Activated CD4-positive, alpha-beta T cell treated with anti-CD3 and anti-CD28 coated beads for 36 hours (primary cell): ENCODE measurements at regions of chr13 and their contacts with region 1.

Region 1: DNA sequence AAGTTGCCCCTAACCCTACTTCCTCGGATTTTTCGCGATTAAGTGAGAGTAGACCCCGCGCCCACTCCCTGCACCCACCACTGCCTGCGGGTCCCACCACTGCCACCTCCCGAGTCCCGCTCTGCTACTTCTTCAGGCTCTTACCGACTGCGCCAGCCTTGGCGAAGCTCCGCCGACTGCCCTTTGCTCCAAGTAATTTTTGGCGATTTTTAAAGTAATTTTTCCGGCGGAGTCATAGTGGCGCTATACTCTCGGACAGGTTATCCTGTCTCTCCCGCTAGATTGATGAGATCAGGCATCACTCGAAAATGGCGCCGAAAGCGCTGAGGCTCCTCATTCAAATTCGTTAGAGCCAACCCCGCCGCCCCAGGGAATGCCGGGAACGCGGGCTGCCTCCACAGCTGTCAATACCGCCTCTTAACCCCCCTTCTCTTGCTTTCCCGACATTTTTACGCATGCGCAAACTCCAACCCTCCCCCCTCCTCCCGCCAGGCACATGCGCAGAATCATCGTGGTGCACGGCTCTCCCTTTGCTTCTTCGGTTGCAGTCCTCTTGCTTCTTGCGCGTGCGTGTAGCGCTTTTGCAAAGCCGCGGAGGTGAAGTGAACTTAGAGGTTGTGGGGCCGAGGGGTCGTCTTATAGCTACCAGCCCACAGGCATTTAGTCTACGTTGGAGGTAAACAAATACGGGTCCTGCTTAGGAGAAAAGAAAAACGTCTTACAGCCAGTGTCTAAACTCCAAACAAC is 66.6 kb downstream of the KCNRG start:
- DNase-seq: peak; percentile 99
- ATAC-seq: peak; percentile 76
- H3K4me3 Mint-ChIP-seq: peak overlapping the region; percentile 94
- H3K27ac Mint-ChIP-seq: peak overlapping the region; percentile 98
- H3K4me1 Mint-ChIP-seq: peaks cover 37% of the 10 kb centered on the region
- H3K27me3 Mint-ChIP-seq: peaks cover 8% of the 10 kb centered on the region

Region 2: GRCh38 chr13:49792550-49793324 is 289.1 kb before region 1 on chr13 and contains the start of gene KPNA3:
- CTCF ChIA-PET with region 1: no interaction called
- POLR2A ChIA-PET with region 1: interaction called, 3 read pairs
- intact Hi-C with region 1: loop called in 1 of 2 experiments (anchors 1 kb)
- DNase-seq: peak; percentile 98
- ATAC-seq: peak; percentile 93
- H3K4me3 Mint-ChIP-seq: peak within 1 kb of the TSS; percentile 89
- H3K27ac Mint-ChIP-seq: peak within 1 kb of the TSS; percentile 88
- H3K4me1 Mint-ChIP-seq: peaks cover 30% of the 10 kb centered on the region
- H3K27me3 Mint-ChIP-seq: peaks cover 4% of the 10 kb centered on the region
- total RNA-seq, gene KPNA3: 51.7 to 58.0 TPM

Region 3: GRCh38 chr13:50094615-50095293 is 12.9 kb after region 1 on chr13:
- CTCF ChIA-PET with region 1: interaction called, 21 read pairs
- POLR2A ChIA-PET with region 1: interaction called, 3 read pairs
- intact Hi-C with region 1: no loop called
- DNase-seq: peak; percentile 35
- ATAC-seq: peak; percentile 94
- H3K4me3 Mint-ChIP-seq: no peak overlapping the region
- H3K27ac Mint-ChIP-seq: no peak overlapping the region
- H3K4me1 Mint-ChIP-seq: peaks cover 32% of the 10 kb centered on the region
- H3K27me3 Mint-ChIP-seq: no peaks in the 10 kb centered on the region

Region 4: DNA sequence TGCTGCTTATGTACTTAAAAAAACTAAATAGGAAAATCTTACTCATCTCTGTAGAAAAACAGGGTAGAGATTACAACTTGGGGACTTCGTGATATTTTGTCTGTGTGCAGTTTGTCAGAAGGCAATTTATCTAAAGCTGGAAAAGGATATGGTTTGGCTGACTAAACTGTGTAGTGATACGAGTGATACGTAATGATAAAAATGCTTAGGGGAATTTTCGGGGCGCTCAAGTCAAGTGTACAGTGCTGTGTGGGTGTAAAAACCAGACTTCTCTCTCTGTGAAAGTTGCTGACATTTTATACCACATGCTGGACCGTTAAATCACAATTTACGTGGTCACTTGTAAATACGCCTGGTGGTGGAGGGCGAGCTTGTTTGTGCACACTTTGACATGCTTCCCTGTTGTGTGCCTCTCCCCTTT is 155.1 kb after region 1 on chr13:
- CTCF ChIA-PET with region 1: interaction called, 3 read pairs
- POLR2A ChIA-PET with region 1: no interaction called
- intact Hi-C with region 1: loop called (anchors 2 kb)
- DNase-seq: peak; percentile 60
- ATAC-seq: peak; percentile 92
- H3K4me3 Mint-ChIP-seq: peak overlapping the region; percentile 47
- H3K27ac Mint-ChIP-seq: peak overlapping the region; percentile 74
- H3K4me1 Mint-ChIP-seq: peaks cover 47% of the 10 kb centered on the region
- H3K27me3 Mint-ChIP-seq: peaks cover 18% of the 10 kb centered on the region

Region 5: GRCh38 chr13:50529154-50529882 is 447.5 kb after region 1 on chr13:
- CTCF ChIA-PET with region 1: no interaction called
- POLR2A ChIA-PET with region 1: no interaction called
- intact Hi-C with region 1: loop called (anchors 5 kb)
- DNase-seq: peak; percentile 46
- ATAC-seq: peak; percentile 94
- H3K4me3 Mint-ChIP-seq: no peak overlapping the region
- H3K27ac Mint-ChIP-seq: no peak overlapping the region
- H3K4me1 Mint-ChIP-seq: peaks cover 30% of the 10 kb centered on the region
- H3K27me3 Mint-ChIP-seq: no peaks in the 10 kb centered on the region